ENCODE measurements at regions of chr2 and their contacts with region 1.

Region 1: DNA sequence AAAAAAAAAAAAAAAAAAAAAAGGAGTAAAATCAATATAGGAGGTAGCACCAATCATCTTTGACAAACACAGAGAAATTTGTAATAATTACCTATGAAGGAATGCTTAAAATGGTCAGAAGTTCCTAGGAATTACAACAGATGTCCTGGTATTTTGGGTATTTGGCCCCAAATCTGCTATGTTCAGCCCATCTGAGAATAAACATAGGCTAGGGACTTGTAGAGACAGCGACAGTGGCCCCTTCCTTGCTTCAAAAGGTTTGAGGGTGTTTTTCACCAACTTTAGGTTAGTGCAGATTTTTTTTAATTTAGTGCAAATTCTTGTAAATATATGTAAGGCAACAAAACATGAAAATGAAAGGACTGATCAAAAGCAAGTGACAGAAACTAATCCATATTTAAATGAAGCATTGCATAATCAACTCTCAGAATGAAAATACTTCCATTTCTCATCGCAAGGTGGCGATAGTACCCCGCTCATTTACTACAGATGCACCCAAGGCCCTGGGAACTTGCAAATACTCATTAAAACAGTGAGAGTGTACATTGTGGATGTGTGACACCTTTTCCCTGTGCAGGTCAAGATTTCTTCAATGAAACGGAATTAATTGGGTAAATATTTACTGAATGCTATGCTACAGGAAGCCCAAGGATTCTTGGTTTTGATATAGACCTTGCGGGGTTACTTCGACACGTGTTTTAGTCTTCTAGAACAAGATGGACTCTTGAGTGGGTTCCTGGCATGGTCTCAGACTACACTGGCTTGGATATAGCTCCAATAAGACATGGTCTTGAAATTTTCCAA is 44.6 kb downstream of the FAM124B start:
- DNase-seq: no peak
- ATAC-seq: peak; percentile 57 to 73
- H3K4me3 ChIP-seq: no peak overlapping the region
- H3K27ac ChIP-seq: no peak overlapping the region
- H3K4me1 ChIP-seq: no peaks in the 10 kb centered on the region
- H3K27me3 ChIP-seq: no peaks in the 10 kb centered on the region

Region 2: GRCh38 chr2:224401641-224402342 is 44.5 kb after region 1 on chr2 and contains the start of gene FAM124B:
- intact Hi-C with region 1: no loop called
- DNase-seq: peak; percentile 75 to 86 (median 80)
- ATAC-seq: peak; percentile 90 to 97
- H3K4me3 ChIP-seq: peak within 1 kb of the TSS; percentile 58
- H3K27ac ChIP-seq: peak within 1 kb of the TSS; percentile 4
- H3K4me1 ChIP-seq: no peaks in the 10 kb centered on the region
- H3K27me3 ChIP-seq: no peaks in the 10 kb centered on the region
- total RNA-seq, gene FAM124B: 0.44 to 2.1 (median 1.1) TPM

Region 3: DNA sequence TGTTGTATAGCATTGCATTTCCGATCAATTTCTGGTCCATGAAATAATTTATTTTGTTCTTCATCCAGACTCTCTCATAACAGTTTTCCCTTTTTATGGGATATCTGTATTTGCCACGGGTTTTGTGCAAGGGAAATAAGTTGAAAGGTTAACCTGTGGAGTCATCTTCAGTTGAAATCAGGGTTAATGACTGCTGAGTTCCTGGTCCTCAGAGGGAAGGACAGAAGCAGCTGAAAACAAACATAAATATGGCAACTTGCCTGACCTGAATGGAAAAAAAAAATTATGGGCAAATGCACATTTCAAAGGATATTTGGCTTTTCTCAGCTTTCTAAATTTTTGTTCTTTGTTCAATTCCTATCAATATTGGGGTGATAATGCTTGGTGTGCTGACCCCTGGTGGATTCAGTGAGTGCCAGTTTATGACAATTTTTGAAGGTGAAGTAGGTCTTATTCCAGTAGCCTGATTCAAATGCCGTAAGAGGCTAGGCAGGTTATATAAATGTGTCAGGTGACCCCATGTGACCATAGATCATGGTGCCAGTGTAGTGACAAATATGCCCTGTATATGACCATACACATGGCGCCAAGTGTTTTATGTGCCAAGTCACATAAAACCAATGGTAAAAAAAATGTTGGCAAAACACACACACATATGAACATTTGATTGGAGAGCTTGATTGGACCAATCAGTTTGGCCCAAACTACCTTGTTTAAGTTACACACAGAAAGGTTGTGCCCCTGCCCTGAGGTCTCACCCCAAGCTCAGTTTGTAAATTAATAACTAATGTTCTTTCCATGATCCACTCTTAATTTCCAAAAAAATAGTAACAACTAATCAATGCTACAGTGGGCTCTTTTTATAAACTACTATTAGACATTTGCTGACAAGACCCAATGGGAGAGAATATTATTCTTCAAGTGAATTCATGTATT is 92.2 kb after region 1 on chr2:
- intact Hi-C with region 1: loop called in 2 of 4 experiments (anchors 10 kb)
- DNase-seq: no peak
- ATAC-seq: no peak
- H3K4me3 ChIP-seq: no peak overlapping the region
- H3K27ac ChIP-seq: no peak overlapping the region
- H3K4me1 ChIP-seq: no peaks in the 10 kb centered on the region
- H3K27me3 ChIP-seq: no peaks in the 10 kb centered on the region

Region 4: DNA sequence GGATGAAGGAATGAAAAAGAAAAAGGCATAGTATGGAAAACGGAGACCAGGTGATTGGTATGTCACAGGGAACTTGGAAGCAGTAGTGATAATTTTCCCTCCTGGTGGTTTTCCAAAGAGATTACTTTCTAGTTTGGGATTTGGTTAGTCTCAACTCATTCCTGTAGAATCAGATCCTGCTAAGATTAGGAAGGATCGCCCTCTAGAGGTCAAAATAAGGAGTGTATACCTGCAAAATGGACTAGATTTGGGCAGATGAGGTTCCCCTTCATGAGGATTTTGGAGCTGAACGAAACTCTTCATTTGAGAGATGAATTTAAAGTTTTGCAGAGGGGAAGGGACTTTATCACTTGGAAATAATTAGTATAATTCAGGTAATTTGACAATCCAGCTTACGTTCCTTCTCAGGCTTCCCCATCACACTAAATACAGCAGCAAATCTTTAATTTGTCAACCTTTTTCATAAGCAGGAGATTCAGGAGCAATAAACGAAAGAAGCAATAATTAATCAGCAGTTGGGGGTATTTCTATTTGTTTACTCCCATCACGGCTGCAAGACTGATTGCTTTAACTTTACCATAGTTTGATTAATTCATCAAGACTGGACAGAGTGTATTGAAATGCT is 293.6 kb after region 1 on chr2:
- intact Hi-C with region 1: loop called in 3 of 4 experiments (anchors 2 to 5 kb)
- DNase-seq: no peak
- ATAC-seq: peak; percentile 47 to 72
- H3K4me3 ChIP-seq: no peak overlapping the region
- H3K27ac ChIP-seq: no peak overlapping the region
- H3K4me1 ChIP-seq: no peaks in the 10 kb centered on the region
- H3K27me3 ChIP-seq: no peaks in the 10 kb centered on the region

Region 5: GRCh38 chr2:224778474-224778877 is 421.2 kb after region 1 on chr2:
- intact Hi-C with region 1: loop called in 3 of 4 experiments (anchors 5 kb)
- DNase-seq: peak in 1 of 3 donors; percentile 33
- ATAC-seq: peak in 1 of 2 donors; percentile 34
- H3K4me3 ChIP-seq: no peak overlapping the region
- H3K27ac ChIP-seq: no peak overlapping the region
- H3K4me1 ChIP-seq: no peaks in the 10 kb centered on the region
- H3K27me3 ChIP-seq: no peaks in the 10 kb centered on the region